ENCODE measurements at regions of chr2 and their contacts with region 1.

Region 1: DNA sequence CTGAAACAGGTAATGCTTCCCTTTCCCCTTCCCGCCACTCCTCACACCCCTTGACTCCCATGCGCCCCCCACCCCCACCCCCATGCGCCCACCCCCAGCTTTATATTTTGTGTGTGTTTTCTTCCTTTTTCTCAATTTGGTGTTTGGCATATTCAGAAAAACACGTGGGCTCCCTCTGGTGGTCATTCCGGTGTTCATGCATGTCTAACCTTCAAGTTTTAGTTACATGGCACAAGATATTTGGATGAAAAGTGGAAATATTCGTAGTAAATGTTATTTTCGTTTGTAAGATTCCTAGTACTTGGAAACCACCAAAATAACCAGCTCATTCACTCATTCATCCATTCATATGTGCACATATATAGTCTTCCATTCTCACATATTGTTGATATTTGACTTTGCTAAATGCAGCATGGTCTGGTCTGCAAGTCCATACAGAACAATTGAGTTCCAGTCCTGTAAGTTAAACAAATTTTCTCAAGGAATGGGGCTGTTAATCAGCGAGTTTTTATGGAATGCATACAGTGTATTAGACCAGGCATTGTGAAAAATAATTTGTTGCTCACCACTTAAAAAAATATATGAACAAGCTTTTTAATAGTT is 143.6 kb upstream of the MAP3K20 start:
- DNase-seq: no peak
- H3K4me3 ChIP-seq: no peak overlapping the region
- CTCF ChIP-seq: peak; percentile 64

Region 2: DNA sequence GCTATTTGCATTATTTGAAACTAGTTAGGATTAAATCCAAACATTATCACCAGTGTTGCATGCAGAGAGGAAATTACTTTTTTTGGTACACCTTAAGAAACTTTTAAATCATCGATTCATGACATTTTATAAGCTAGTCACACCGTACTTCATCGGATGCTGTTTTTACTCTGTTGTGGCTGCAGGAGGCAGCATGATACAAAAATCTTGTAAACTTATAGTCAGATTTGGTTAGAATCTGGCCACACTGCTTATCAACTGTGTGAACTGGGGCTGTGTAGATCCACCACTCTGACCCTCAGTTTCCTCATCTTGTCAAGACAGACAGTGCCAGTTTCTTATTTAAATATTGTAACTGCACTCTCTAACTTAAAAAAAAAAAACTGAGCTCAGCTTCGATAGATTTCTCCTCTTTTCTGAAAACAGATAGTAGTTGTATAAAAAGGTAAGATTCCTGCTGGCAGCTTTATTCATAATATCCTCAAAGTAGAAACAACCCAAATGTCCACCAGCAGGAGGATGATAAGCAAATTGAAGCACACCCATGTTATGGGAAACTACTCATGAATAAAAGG is 118.6 kb before region 1 on chr2:
- CTCF ChIA-PET with region 1: interaction called, 254 read pairs
- POLR2A ChIA-PET with region 1: no interaction called
- DNase-seq: no peak
- H3K4me3 ChIP-seq: no peak overlapping the region
- CTCF ChIP-seq: no peak

Region 3: GRCh38 chr2:172848549-172848948 is 83.5 kb before region 1 on chr2:
- CTCF ChIA-PET with region 1: interaction called, 12 read pairs
- POLR2A ChIA-PET with region 1: no interaction called
- DNase-seq: no peak
- H3K4me3 ChIP-seq: no peak overlapping the region
- CTCF ChIP-seq: no peak

Region 4: GRCh38 chr2:172888714-172889669 is 43.0 kb before region 1 on chr2:
- CTCF ChIA-PET with region 1: interaction called, 15 read pairs
- POLR2A ChIA-PET with region 1: no interaction called
- DNase-seq: no peak
- H3K4me3 ChIP-seq: no peak overlapping the region
- CTCF ChIP-seq: no peak

Region 5: GRCh38 chr2:172921532-172922236 is 10.3 kb before region 1 on chr2:
- CTCF ChIA-PET with region 1: interaction called, 51 read pairs
- POLR2A ChIA-PET with region 1: no interaction called
- DNase-seq: no peak
- H3K4me3 ChIP-seq: no peak overlapping the region
- CTCF ChIP-seq: no peak

Region 6: GRCh38 chr2:173021939-173022371 is 89.9 kb after region 1 on chr2:
- CTCF ChIA-PET with region 1: interaction called, 29 read pairs
- POLR2A ChIA-PET with region 1: no interaction called
- DNase-seq: no peak
- H3K4me3 ChIP-seq: no peak overlapping the region
- CTCF ChIP-seq: peak; percentile 23

Region 7: DNA sequence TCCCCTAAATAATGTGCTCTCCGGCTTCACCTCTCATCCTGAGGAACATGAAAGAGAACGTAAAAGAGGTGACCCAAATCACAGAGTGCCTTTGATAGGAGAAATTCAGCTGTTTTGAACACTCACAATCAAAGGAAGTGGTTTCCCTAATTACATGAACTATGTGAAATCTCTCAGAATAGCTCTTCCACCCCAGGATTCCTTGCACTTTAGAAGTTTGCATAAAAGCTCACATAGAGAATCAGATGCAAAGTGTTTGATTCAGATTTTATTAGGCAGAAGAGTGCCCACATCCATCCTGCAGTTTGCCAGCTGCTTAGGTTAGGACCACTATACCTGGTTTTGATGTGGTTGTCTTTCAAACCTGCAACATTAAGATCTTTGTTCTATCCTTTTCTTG is 204.6 kb after region 1 on chr2:
- CTCF ChIA-PET with region 1: no interaction called
- POLR2A ChIA-PET with region 1: no interaction called
- DNase-seq: no peak
- H3K4me3 ChIP-seq: no peak overlapping the region
- CTCF ChIP-seq: no peak

Region 8: DNA sequence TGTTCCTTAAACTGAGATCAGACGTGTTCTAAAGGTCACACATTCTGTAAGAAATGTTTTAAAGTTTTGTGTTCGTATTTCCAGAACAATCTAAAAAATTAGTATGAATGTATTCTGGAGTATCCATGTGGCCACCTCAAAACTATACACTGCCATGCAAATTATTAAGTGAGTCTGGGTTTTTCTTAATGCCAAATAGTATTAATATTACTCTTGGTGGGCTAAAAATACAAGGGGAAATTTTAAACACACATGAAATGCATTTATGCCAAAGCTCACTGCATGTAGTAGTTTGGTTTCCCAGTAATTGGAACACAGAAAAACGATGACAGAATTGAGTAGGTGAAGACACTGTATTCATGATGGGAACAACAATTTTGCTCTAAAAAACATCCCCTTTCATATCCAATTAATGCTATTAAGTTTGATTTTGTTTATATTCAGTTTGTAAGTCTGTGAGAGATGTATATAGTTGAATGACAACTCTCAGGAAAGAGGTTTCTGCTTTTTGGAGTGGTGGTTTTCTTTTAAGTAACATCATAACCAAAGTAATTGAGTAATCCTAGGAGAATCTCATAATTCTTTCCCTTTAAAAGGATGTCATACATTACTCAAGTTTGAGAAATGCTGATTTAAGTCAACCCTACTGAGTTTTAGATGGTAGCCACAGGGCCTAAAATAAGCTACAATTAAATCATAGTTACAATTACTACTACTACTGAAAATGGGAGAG is 346.9 kb after region 1 on chr2:
- CTCF ChIA-PET with region 1: no interaction called
- POLR2A ChIA-PET with region 1: no interaction called
- DNase-seq: no peak
- H3K4me3 ChIP-seq: no peak overlapping the region
- CTCF ChIP-seq: no peak